H1 (cell line): ENCODE measurements at regions of chr9 and their contacts with region 1.

Region 1: GRCh38 chr9:100216178-100216787 is 117.2 kb downstream of the INVS start:
- DNase-seq: peak; percentile 58 to 87
- H3K4me3 ChIP-seq: no peak overlapping the region
- H3K27ac ChIP-seq: no peak overlapping the region
- H3K4me1 ChIP-seq: no peaks in the 10 kb centered on the region
- H3K27me3 ChIP-seq: no peaks in the 10 kb centered on the region
- CTCF ChIP-seq: peak; percentile 71 to 94 (median 88)
- EP300 ChIP-seq: no peak
- POLR2A ChIP-seq: no peak
- RAD21 ChIP-seq: peak; percentile 94 to 95

Region 2: GRCh38 chr9:100120286-100120685 is 96.0 kb before region 1 on chr9:
- CTCF ChIA-PET with region 1: no interaction called
- POLR2A ChIA-PET with region 1: no interaction called
- DNase-seq: no peak
- H3K4me3 ChIP-seq: no peak overlapping the region
- H3K27ac ChIP-seq: no peak overlapping the region
- H3K4me1 ChIP-seq: no peaks in the 10 kb centered on the region
- H3K27me3 ChIP-seq: no peaks in the 10 kb centered on the region
- CTCF ChIP-seq: no peak
- EP300 ChIP-seq: no peak
- POLR2A ChIP-seq: no peak
- RAD21 ChIP-seq: no peak

Region 3: DNA sequence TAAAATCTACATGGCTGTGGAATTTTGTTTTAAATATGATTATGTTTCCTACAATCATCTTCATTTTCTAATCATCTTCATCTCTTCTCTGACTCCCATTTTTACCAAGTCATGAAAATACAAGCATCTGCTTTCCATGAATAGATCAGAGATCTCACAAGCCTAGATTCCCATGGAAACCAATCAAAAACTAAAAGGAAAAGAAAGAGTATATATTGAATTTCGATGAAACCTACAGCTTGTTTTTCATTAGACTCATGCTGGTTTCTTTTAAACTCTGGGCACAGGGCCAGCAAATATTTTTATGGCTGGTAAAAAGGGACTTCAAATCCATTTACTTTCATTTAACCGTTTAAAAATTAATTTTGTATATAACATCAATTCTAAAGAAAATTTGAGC is 66.1 kb before region 1 on chr9:
- CTCF ChIA-PET with region 1: interaction called, 10 read pairs
- POLR2A ChIA-PET with region 1: interaction called, 3 read pairs
- DNase-seq: no peak
- H3K4me3 ChIP-seq: no peak overlapping the region
- H3K27ac ChIP-seq: no peak overlapping the region
- H3K4me1 ChIP-seq: peaks cover 0 to 7% (median 3%) of the 10 kb centered on the region in 4 experiments; a peak in 2 of 7 replicates
- H3K27me3 ChIP-seq: no peaks in the 10 kb centered on the region
- CTCF ChIP-seq: no peak
- EP300 ChIP-seq: no peak
- POLR2A ChIP-seq: no peak
- RAD21 ChIP-seq: no peak

Region 4: DNA sequence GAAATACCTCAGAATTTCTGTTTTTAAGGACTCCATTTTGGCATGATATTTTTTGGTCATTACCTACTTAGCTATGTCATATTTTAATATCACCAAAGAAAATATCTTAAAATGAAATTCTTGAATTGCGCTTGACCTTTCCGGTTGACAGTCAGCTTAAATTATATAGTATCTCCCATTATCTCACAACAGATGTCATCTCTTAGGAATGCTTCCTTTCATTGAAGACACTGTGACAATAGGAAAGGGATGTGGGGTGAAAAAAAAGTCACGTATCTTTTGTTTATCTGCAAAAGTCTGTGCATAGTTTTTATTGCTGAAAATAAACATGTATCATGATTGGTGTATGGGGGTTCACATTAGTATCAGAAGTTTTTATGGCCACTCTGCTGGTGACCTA is 11.5 kb before region 1 on chr9:
- CTCF ChIA-PET with region 1: interaction called, 15 read pairs
- POLR2A ChIA-PET with region 1: interaction called, 4 read pairs
- DNase-seq: no peak
- H3K4me3 ChIP-seq: no peak overlapping the region
- H3K27ac ChIP-seq: no peak overlapping the region
- H3K4me1 ChIP-seq: no peaks in the 10 kb centered on the region
- H3K27me3 ChIP-seq: no peaks in the 10 kb centered on the region
- CTCF ChIP-seq: no peak
- EP300 ChIP-seq: no peak
- POLR2A ChIP-seq: no peak
- RAD21 ChIP-seq: no peak

Region 5: DNA sequence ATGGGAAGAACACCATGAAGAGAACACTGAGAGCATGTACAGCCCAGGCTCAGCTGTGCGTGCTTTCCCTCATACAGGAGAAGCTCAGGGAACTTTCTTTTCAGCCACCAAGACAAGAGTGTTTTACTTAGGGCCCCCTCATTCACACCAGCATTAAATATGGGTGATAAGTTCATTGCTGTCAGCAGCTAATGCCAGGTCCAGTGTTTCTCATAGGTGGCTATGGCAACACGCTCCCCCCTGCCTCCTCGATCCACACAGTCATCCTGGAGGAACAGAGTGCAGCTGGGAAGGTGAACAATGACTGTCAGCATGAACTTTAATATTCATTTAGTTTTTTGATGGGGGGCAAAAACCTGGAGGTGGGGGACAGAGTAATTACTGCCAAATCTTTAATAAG is 82.1 kb after region 1 on chr9:
- CTCF ChIA-PET with region 1: no interaction called
- POLR2A ChIA-PET with region 1: no interaction called
- DNase-seq: no peak
- H3K4me3 ChIP-seq: no peak overlapping the region
- H3K27ac ChIP-seq: no peak overlapping the region
- H3K4me1 ChIP-seq: no peaks in the 10 kb centered on the region
- H3K27me3 ChIP-seq: no peaks in the 10 kb centered on the region
- CTCF ChIP-seq: no peak
- EP300 ChIP-seq: no peak
- POLR2A ChIP-seq: no peak
- RAD21 ChIP-seq: no peak